HepG2 (cell line): ENCODE measurements at regions of chr22 and their contacts with region 1.

Region 1: GRCh38 chr22:19730655-19731360 is 7.5 kb downstream of the GP1BB start:
- DNase-seq: peak; percentile 78
- ATAC-seq: peak; percentile 87
- H3K4me3 ChIP-seq: peak overlapping the region; percentile 9 to 61 (median 48); a peak in 5 of 6 replicates
- H3K27ac ChIP-seq: no peak overlapping the region
- H3K4me1 ChIP-seq: peaks cover 29% of the 10 kb centered on the region
- H3K27me3 ChIP-seq: peaks cover 7 to 70% of the 10 kb centered on the region in 2 experiments; a peak in 4 of 5 replicates
- CTCF ChIP-seq: peak; percentile 99
- EP300 ChIP-seq: peak in 1 of 2 experiments; percentile 38; a peak in 1 of 4 replicates
- POLR2A ChIP-seq: no peak
- RAD21 ChIP-seq: peak; percentile 99

Region 2: DNA sequence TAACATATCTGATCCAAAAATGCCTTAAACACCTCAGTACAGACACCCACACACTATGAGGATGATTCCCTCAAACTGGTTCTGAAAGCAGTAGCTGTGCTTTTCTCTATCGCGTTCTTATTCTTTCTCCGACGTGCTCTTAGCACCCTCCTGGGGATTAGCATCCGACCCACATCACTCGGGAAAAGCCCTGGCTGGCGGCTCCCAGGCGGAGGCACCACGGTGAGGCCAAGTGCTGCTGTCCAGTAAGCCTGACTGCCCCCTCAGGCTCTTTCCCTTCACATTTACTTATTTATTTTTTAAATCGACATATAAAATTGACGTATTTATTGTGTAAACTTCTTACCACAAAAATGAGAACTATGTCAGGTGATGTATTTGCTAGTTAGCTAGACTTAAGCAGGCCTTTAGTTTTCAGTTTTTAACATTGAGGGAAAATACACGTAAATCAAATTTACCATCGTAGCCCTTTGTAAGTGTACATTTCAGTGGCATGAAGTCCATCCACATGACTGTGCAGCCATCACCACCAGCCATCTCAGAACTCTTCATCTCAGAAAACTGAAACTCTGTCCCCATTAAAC is 49.0 kb after region 1 on chr22:
- CTCF ChIA-PET with region 1: no interaction called
- POLR2A ChIA-PET with region 1: no interaction called
- in situ Hi-C with region 1: no loop called
- intact Hi-C with region 1: loop called (anchors 5 kb)
- DNase-seq: no peak
- ATAC-seq: no peak
- H3K4me3 ChIP-seq: no peak overlapping the region
- H3K27ac ChIP-seq: no peak overlapping the region
- H3K4me1 ChIP-seq: 0 out of 2 replicates have a peak, but pooled peaks cover 5% of the 10 kb centered on the region
- H3K27me3 ChIP-seq: peaks cover 4 to 45% of the 10 kb centered on the region in 2 experiments; a peak in 4 of 5 replicates
- CTCF ChIP-seq: no peak
- EP300 ChIP-seq: no peak
- POLR2A ChIP-seq: no peak
- RAD21 ChIP-seq: no peak

Region 3: GRCh38 chr22:19800761-19801244 is 70.0 kb after region 1 on chr22:
- CTCF ChIA-PET with region 1: interaction called, 12 read pairs
- POLR2A ChIA-PET with region 1: no interaction called
- in situ Hi-C with region 1: no loop called
- intact Hi-C with region 1: loop called (anchors 2 kb)
- DNase-seq: peak; percentile 34
- ATAC-seq: peak; percentile 83
- H3K4me3 ChIP-seq: no peak overlapping the region
- H3K27ac ChIP-seq: no peak overlapping the region
- H3K4me1 ChIP-seq: no peaks in the 10 kb centered on the region
- H3K27me3 ChIP-seq: no peaks in the 10 kb centered on the region
- CTCF ChIP-seq: peak; percentile 62
- EP300 ChIP-seq: no peak
- POLR2A ChIP-seq: no peak
- RAD21 ChIP-seq: peak; percentile 64

Region 4: GRCh38 chr22:19903031-19903430 is 172.2 kb after region 1 on chr22:
- CTCF ChIA-PET with region 1: interaction called, 39 read pairs
- POLR2A ChIA-PET with region 1: no interaction called
- in situ Hi-C with region 1: loop called (anchors 5 kb)
- intact Hi-C with region 1: no loop called
- DNase-seq: no peak
- ATAC-seq: no peak
- H3K4me3 ChIP-seq: no peak overlapping the region
- H3K27ac ChIP-seq: no peak overlapping the region
- H3K4me1 ChIP-seq: peaks cover 55% of the 10 kb centered on the region
- H3K27me3 ChIP-seq: no peaks in the 10 kb centered on the region
- CTCF ChIP-seq: no peak
- EP300 ChIP-seq: no peak
- POLR2A ChIP-seq: no peak
- RAD21 ChIP-seq: no peak

Region 5: GRCh38 chr22:19909350-19910179 is 178.8 kb after region 1 on chr22:
- CTCF ChIA-PET with region 1: interaction called, 39 read pairs
- POLR2A ChIA-PET with region 1: interaction called, 8 read pairs
- in situ Hi-C with region 1: loop called (anchors 5 kb)
- intact Hi-C with region 1: loop called (anchors 1 kb)
- DNase-seq: peak; percentile 64
- ATAC-seq: peak; percentile 96
- H3K4me3 ChIP-seq: no peak overlapping the region
- H3K27ac ChIP-seq: no peak overlapping the region
- H3K4me1 ChIP-seq: peaks cover 10% of the 10 kb centered on the region
- H3K27me3 ChIP-seq: no peaks in the 10 kb centered on the region
- CTCF ChIP-seq: peak; percentile 98
- EP300 ChIP-seq: no peak
- POLR2A ChIP-seq: no peak
- RAD21 ChIP-seq: peak; percentile 95